HEK293 (cell line): ENCODE measurements at regions of chr3 and their contacts with region 1.

Region 1: GRCh38 chr3:14921078-14921616 is 26.2 kb upstream of the NR2C2 start:
- H3K4me3 ChIP-seq: no peak overlapping the region
- H3K27ac ChIP-seq: no peak overlapping the region
- H3K4me1 ChIP-seq: no peaks in the 10 kb centered on the region
- CTCF ChIP-seq: peak; percentile 98

Region 2: DNA sequence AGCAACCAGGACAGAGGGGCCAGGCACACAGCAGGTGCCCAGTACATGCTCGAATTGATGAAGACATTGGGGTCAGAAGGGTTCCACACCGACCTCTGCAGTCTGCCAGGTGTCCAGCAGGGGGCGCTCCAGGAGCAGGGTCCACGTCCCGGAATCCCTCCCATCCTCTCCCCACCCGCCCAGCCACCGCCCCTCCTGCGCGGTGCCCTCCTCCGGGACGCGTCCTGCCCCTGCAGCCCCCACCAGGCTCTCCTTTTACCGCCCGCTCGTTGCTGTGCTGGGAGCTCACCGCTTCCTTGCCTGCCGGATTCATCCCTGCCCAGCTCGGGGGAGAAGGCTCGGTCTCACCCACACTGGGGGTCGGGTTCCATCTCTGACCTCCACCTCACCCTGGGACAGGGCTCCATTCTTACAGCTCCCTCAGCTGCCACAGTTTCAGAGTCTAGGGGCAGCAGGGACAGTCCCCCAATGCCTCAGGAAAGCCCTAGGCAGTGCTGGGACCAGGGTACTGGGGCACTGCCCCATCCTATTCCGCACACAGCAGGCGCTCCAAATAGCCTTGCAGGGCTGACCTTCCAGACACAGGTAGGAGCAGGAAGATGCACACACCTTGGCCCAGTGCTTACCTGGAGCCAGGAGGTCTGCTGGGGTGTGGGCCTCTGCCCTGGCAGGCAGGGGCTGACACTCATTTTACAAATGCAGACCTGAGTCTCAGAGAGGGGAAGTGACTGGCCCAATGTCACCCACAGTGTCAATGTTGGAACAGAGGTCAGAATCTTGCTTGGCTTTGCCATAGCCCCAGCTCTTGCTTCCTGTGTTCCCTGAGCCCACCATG is 412.0 kb before region 1 on chr3:
- CTCF ChIA-PET with region 1: interaction called, 14 read pairs
- POLR2A ChIA-PET with region 1: no interaction called
- H3K4me3 ChIP-seq: no peak overlapping the region
- H3K27ac ChIP-seq: no peak overlapping the region
- H3K4me1 ChIP-seq: no peaks in the 10 kb centered on the region
- CTCF ChIP-seq: peak; percentile 79

Region 3: GRCh38 chr3:14672588-14672987 is 248.6 kb before region 1 on chr3:
- CTCF ChIA-PET with region 1: interaction called, 41 read pairs
- POLR2A ChIA-PET with region 1: no interaction called
- H3K4me3 ChIP-seq: no peak overlapping the region
- H3K27ac ChIP-seq: no peak overlapping the region
- H3K4me1 ChIP-seq: no peaks in the 10 kb centered on the region
- CTCF ChIP-seq: no peak

Region 4: GRCh38 chr3:14791343-14791945 is 129.7 kb before region 1 on chr3:
- CTCF ChIA-PET with region 1: interaction called, 91 read pairs
- POLR2A ChIA-PET with region 1: interaction called, 6 read pairs
- H3K4me3 ChIP-seq: no peak overlapping the region
- H3K27ac ChIP-seq: no peak overlapping the region
- H3K4me1 ChIP-seq: no peaks in the 10 kb centered on the region
- CTCF ChIP-seq: peak; percentile 89

Region 5: GRCh38 chr3:14943042-14943441 is 21.9 kb after region 1 on chr3:
- CTCF ChIA-PET with region 1: interaction called, 10 read pairs
- POLR2A ChIA-PET with region 1: interaction called, 4 read pairs
- H3K4me3 ChIP-seq: no peak overlapping the region
- H3K27ac ChIP-seq: no peak overlapping the region
- H3K4me1 ChIP-seq: peaks cover 3% of the 10 kb centered on the region; the same call in 1 of the 2 replicates
- CTCF ChIP-seq: no peak